HCT116 (cell line): ENCODE measurements at regions of chr12 and their contacts with region 1.

Region 1: GRCh38 chr12:106357549-106358395 is at the start of gene POLR3B:
- DNase-seq: peak; percentile 93
- ATAC-seq: peak; percentile 90
- H3K4me3 ChIP-seq: peak within 1 kb of the TSS; percentile 85 to 89
- H3K27ac ChIP-seq: peak within 1 kb of the TSS; percentile 70
- H3K4me1 ChIP-seq: peaks cover 3 to 11% of the 10 kb centered on the region in 2 experiments; a peak in 3 of 4 replicates
- H3K27me3 ChIP-seq: no peaks in the 10 kb centered on the region
- CTCF ChIP-seq: peak; percentile 78 to 90 (median 87)
- POLR2A ChIP-seq: peak; percentile 66
- RAD21 ChIP-seq: peak; percentile 87
- total RNA-seq, gene POLR3B: 10.7 TPM

Region 2: DNA sequence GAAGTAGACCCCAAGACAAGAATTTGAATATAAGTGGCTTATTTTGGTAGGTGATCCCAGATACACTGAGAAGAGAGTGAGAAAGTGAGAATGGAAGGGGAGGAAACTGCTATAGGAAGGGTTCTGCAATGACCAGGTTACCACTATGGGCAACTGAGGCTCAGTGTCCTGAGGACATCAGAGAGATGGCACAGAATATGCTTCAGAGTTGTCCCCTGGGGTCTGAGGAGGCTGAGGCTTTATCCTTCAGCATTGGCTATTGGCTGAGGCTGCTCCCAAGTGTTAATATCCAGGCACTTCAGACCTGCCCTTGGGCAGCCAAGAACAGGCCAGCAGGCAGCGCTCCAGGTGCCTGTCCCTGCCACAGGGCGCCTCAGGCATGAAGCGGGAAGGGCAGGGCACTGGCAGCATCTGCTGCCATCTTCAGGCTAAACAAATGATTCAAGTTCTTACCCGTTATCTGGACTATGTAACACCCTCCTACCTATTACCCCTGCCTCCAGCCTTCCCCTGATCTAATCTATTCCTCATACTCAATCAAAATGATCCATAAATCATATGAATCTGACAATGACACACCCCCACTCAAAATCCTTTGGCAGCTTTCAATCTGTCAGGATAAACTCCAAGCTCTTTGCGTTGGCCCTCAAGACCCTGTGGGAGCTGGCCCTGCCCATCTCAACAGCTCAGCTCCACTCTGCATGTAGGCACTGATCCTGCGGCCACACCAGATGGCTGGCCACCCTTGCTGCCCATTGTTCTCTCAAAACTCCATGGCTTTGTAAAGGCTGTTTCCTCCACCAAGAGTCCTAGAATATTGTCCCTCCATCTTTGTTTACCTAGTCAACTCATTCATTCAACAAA is 152.3 kb before region 1 on chr12:
- CTCF ChIA-PET with region 1: no interaction called
- POLR2A ChIA-PET with region 1: no interaction called
- RAD21 ChIA-PET with region 1: no interaction called
- intact Hi-C with region 1: no loop called
- DNase-seq: peak; percentile 64
- ATAC-seq: peak; percentile 100
- H3K4me3 ChIP-seq: no peak overlapping the region
- H3K27ac ChIP-seq: no peak overlapping the region
- H3K4me1 ChIP-seq: no peaks in the 10 kb centered on the region; a peak in 1 of 4 replicates
- H3K27me3 ChIP-seq: peaks cover 5% of the 10 kb centered on the region; the same call in 1 of the 2 replicates
- CTCF ChIP-seq: peak; percentile 61 to 93 (median 69)
- POLR2A ChIP-seq: no peak
- RAD21 ChIP-seq: peak; percentile 83

Region 3: DNA sequence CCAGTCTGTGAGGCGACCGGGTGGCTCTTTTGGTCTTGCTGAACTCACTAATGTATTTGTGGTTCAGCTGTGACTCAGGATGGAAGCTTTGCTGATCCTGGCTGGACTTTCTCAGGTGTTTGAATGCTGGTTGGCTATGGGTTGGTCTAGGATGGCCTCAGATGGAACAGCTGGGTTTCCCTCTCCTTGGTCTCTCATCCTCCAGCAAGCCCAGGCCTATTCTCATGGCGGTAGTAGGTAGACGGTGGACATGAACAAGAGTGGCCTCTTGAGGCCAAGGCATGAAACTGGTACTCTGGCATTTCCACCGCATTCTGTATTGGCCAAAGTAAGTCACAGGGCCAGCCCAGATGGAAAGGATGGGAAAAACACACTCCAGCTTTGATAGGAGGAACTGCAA is 12.0 kb before region 1 on chr12:
- CTCF ChIA-PET with region 1: interaction called, 12 read pairs
- POLR2A ChIA-PET with region 1: interaction called, 3 read pairs
- RAD21 ChIA-PET with region 1: interaction called in 1 of 2 experiments, 3 read pairs
- intact Hi-C with region 1: no loop called
- DNase-seq: peak; percentile 51
- ATAC-seq: peak; percentile 95
- H3K4me3 ChIP-seq: no peak overlapping the region
- H3K27ac ChIP-seq: no peak overlapping the region
- H3K4me1 ChIP-seq: peaks cover 10 to 12% of the 10 kb centered on the region in 2 experiments
- H3K27me3 ChIP-seq: 0 out of 2 replicates have a peak, but pooled peaks cover 1% of the 10 kb centered on the region
- CTCF ChIP-seq: peak; percentile 39 to 58 (median 54); a peak in 4 of 6 replicates
- POLR2A ChIP-seq: no peak
- RAD21 ChIP-seq: peak; percentile 72

Region 4: DNA sequence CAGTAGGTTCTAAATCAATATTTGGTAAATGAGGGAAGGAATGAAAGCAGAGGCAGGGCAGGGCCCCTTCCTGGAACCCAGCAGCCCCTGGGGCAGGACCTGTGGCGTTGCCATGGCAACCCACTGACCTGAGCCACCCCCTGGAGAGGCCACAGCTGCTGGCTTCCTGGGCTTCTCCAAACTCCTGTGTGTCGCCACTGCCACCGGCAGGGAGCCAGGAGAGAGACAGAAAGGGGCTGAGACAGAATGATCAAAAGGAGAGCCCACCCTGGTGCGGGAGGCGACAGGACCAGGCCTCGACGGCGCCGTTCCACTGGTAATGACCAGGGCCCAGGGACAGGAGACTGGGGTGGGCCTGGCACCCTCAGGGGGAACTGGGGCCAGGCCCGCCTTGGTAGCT is 243.3 kb after region 1 on chr12:
- CTCF ChIA-PET with region 1: no interaction called
- POLR2A ChIA-PET with region 1: no interaction called
- RAD21 ChIA-PET with region 1: no interaction called
- intact Hi-C with region 1: no loop called
- DNase-seq: no peak
- ATAC-seq: 0 out of 2 replicates have a peak, but pooled peaks have one; percentile 30
- H3K4me3 ChIP-seq: no peak overlapping the region
- H3K27ac ChIP-seq: no peak overlapping the region
- H3K4me1 ChIP-seq: no peaks in the 10 kb centered on the region
- H3K27me3 ChIP-seq: no peaks in the 10 kb centered on the region
- CTCF ChIP-seq: no peak
- POLR2A ChIP-seq: no peak
- RAD21 ChIP-seq: no peak

Region 5: DNA sequence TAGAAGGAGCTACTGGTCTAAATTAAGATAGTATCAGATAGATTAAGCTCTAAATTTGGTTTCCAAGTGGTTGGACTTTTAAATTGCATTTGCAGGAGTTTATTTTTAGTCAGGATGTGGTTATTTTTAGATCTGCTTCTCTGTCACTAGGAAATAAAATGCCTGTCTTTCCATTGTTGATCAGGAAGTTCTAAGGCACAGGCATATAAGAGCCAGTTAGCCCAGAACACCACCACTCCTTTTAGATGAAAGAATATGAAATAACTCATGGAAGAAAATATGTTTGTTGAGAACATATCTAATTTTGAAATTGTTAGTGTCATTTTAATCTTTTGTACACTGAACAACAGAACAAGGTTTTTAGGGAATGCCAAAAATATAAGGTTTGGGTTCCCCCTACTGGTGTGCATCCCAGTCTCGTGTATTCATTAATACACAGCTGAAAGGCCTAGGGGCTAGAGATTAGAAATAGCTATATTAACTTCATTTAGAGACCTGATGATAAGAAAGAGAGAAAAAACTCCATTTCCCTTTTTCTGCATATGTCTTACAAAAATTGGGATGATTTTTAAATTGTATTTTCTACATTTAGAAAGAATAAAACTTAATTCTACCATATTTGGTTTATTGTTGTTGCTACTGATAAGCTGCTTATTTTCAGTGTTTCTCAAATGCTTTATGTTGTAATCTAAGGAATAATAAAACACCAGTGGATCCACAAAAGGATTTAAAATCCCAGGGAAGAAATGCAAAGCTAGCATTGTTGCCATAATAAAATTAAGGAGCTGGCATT is 483.9 kb after region 1 on chr12:
- CTCF ChIA-PET with region 1: interaction called, 34 read pairs
- POLR2A ChIA-PET with region 1: no interaction called
- RAD21 ChIA-PET with region 1: interaction called in 1 of 2 experiments, 4 read pairs
- intact Hi-C with region 1: loop called (anchors 2 kb)
- DNase-seq: peak; percentile 31
- ATAC-seq: peak; percentile 82
- H3K4me3 ChIP-seq: no peak overlapping the region
- H3K27ac ChIP-seq: no peak overlapping the region
- H3K4me1 ChIP-seq: peaks cover 7 to 12% of the 10 kb centered on the region in 2 experiments
- H3K27me3 ChIP-seq: no peaks in the 10 kb centered on the region
- CTCF ChIP-seq: peak; percentile 64 to 81 (median 69); a peak in 5 of 6 replicates
- POLR2A ChIP-seq: no peak
- RAD21 ChIP-seq: peak; percentile 81

Region 6: DNA sequence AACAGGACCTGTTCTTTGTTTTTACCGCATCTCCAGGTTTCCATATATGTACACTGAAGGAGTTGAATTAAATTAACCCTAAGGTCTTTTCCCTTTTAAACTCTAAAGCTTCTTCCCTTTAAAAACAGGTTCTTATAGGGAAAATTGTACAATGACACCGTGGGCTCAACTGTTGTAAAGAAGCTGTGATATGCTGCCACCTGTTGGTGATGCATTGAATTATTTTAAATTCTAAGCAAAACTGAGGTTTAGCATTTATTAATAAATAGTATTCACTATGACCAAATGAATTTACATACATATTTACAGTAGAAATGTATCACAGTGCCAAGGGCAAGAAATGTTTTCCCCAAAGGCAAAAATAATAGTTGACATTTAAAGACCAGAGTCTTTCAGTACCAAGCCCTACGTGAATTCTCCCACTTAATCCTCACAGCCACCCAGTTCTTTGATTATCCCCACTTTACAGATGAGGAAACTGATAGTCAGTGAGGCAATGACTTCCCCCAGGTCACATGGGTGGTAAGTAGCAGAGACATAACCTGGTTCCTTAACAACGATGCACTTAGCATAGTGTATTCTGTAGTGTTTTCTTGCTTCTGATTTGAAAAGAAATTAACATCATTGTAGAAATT is 562.3 kb after region 1 on chr12:
- CTCF ChIA-PET with region 1: interaction called, 34 read pairs
- POLR2A ChIA-PET with region 1: interaction called, 4 read pairs
- RAD21 ChIA-PET with region 1: interaction called in 1 of 2 experiments, 6 read pairs
- intact Hi-C with region 1: loop called (anchors 1 kb)
- DNase-seq: peak; percentile 34
- ATAC-seq: peak; percentile 66
- H3K4me3 ChIP-seq: no peak overlapping the region
- H3K27ac ChIP-seq: no peak overlapping the region
- H3K4me1 ChIP-seq: no peaks in the 10 kb centered on the region
- H3K27me3 ChIP-seq: no peaks in the 10 kb centered on the region
- CTCF ChIP-seq: peak; percentile 65 to 85 (median 70); a peak in 5 of 6 replicates
- POLR2A ChIP-seq: no peak
- RAD21 ChIP-seq: peak; percentile 83